Kidney (tissue), 22 donors: ENCODE measurements at regions of chr2 and their contacts with region 1.

Region 1: DNA sequence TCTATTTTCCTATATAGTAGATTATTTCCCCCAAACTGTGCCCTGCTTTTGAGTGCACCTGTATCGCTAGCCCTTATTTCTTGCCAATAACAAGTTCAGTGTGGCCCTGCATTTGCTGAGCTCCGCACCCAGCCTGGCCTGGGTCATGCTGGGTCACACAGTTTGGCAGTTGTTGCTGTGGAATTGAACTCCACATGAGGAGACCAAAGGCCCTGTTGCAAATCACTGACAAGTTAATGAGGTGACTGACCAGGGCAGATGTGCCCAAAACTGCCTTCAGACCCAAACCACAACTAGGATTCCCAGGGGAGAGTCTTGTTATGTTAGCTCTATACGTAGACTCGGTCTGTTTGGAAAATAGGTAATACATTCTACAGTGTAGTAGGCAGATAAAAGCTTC is 31.0 kb downstream of the COL4A4 start:
- DNase-seq: no peak
- H3K4me3 ChIP-seq: no peak overlapping the region
- H3K27ac ChIP-seq: no peak overlapping the region
- H3K4me1 ChIP-seq: peaks cover 0 to 5% (median 0%) of the 10 kb centered on the region in 3 donors
- H3K27me3 ChIP-seq: peaks cover 1% of the 10 kb centered on the region
- CTCF ChIP-seq: no peak

Region 2: GRCh38 chr2:226561962-226562361 is 571.0 kb before region 1 on chr2:
- intact Hi-C with region 1: no loop called
- DNase-seq: no peak
- H3K4me3 ChIP-seq: no peak overlapping the region
- H3K27ac ChIP-seq: no peak overlapping the region
- H3K4me1 ChIP-seq: no peaks in the 10 kb centered on the region
- H3K27me3 ChIP-seq: no peaks in the 10 kb centered on the region
- CTCF ChIP-seq: no peak

Region 3: GRCh38 chr2:227204452-227204851 is 71.5 kb after region 1 on chr2:
- intact Hi-C with region 1: no loop called
- DNase-seq: no peak
- H3K4me3 ChIP-seq: no peak overlapping the region
- H3K27ac ChIP-seq: no peak overlapping the region
- H3K4me1 ChIP-seq: peaks cover 2 to 5% (median 3%) of the 10 kb centered on the region in 3 donors
- H3K27me3 ChIP-seq: no peaks in the 10 kb centered on the region
- CTCF ChIP-seq: no peak

Region 4: GRCh38 chr2:227479865-227480475 is 347.0 kb after region 1 on chr2:
- intact Hi-C with region 1: loop called (anchors 10 kb)
- DNase-seq: peak in 2 of 5 donors; percentile 32 to 59
- H3K4me3 ChIP-seq: no peak overlapping the region
- H3K27ac ChIP-seq: no peak overlapping the region
- H3K4me1 ChIP-seq: peaks cover 0 to 4% (median 0%) of the 10 kb centered on the region in 3 donors
- H3K27me3 ChIP-seq: no peaks in the 10 kb centered on the region
- CTCF ChIP-seq: peak; percentile 40

Region 5: GRCh38 chr2:227623234-227623633 is 490.2 kb after region 1 on chr2:
- intact Hi-C with region 1: no loop called
- DNase-seq: no peak
- H3K4me3 ChIP-seq: no peak overlapping the region
- H3K27ac ChIP-seq: no peak overlapping the region
- H3K4me1 ChIP-seq: no peaks in the 10 kb centered on the region
- H3K27me3 ChIP-seq: no peaks in the 10 kb centered on the region
- CTCF ChIP-seq: no peak